Activated CD8-positive, alpha-beta T cell treated with anti-CD3 and anti-CD28 coated beads, Interleukin-2, amount 10 ng/mL, durations not matched to agents 7 days and 5 days (primary cell): ENCODE measurements at regions of chr14 and their contacts with region 1.

Region 1: DNA sequence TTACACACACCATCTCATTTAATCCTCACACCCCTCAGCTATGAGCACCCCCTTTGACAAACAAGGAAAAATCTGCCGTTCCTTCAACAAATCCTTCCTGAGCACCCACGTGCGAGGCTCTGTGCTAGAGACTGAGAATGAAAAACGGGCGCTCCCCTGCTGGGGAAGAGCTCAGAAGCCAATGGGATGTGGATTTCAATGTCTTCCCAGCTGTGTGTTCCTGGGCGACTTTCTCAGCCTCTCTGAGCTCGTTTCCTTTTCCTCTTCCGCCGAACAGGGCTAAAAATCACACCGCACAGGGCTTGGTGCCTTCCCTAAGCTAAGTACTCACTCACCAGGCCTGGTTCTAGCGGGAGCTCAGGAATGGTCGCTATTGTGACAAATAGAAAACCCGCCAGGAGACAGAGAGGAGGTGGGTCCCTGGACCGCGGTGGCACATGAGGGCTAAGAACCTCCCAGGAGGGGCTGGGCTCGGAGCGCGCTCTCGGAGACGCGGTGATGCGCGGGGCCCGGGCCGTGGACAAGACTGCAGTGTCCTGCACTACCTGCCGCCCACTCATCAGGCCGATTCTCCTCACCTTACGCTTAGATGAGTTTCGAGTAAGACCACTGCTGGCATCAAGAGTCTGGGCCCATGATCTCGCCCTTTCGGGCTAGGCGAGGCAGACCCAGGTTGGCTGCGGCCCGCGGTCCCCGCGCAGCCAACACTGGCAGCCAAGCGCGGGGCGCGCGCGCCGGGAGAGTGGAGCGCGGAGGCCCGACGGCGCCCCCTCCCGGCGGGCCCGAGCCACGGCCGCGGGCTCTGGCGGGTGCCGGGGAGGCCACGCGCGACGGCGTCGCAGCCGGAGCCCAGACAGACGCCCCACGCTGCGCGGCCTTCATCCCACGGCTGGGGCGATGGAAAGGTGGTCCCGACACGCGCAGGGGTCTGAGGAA is 17.0 kb downstream of the ZDHHC22 start:
- DNase-seq: peak; percentile 56
- ATAC-seq: peak; percentile 87
- H3K4me3 Mint-ChIP-seq: peak overlapping the region; percentile 70
- H3K27ac Mint-ChIP-seq: no peak overlapping the region
- H3K4me1 Mint-ChIP-seq: peaks cover 40% of the 10 kb centered on the region
- H3K27me3 Mint-ChIP-seq: peaks cover 47% of the 10 kb centered on the region

Region 2: DNA sequence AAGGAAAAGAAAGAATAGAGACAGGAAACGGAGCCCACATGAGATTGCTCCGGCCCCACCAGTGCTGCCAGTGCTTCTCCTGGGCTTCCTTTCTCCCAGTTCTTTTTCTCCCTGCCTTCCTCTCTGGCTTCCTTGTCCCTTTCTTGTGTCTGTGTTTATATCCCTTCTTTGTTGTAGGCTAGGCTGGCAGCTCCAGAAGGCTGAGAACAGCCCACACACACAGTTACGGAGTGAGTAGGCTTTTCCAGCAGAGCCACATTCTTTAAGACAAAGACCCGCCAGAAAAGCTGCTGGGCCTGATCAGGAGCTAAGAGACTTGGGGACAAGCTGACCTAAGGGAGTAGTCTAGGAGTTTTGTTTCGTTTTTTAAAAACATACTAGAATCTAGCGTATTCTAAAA is 13.6 kb before region 1 on chr14:
- CTCF ChIA-PET with region 1: interaction called, 37 read pairs
- POLR2A ChIA-PET with region 1: interaction called, 3 read pairs
- DNase-seq: no peak
- ATAC-seq: no peak
- H3K4me3 Mint-ChIP-seq: no peak overlapping the region
- H3K27ac Mint-ChIP-seq: no peak overlapping the region
- H3K4me1 Mint-ChIP-seq: no peaks in the 10 kb centered on the region
- H3K27me3 Mint-ChIP-seq: no peaks in the 10 kb centered on the region

Region 3: DNA sequence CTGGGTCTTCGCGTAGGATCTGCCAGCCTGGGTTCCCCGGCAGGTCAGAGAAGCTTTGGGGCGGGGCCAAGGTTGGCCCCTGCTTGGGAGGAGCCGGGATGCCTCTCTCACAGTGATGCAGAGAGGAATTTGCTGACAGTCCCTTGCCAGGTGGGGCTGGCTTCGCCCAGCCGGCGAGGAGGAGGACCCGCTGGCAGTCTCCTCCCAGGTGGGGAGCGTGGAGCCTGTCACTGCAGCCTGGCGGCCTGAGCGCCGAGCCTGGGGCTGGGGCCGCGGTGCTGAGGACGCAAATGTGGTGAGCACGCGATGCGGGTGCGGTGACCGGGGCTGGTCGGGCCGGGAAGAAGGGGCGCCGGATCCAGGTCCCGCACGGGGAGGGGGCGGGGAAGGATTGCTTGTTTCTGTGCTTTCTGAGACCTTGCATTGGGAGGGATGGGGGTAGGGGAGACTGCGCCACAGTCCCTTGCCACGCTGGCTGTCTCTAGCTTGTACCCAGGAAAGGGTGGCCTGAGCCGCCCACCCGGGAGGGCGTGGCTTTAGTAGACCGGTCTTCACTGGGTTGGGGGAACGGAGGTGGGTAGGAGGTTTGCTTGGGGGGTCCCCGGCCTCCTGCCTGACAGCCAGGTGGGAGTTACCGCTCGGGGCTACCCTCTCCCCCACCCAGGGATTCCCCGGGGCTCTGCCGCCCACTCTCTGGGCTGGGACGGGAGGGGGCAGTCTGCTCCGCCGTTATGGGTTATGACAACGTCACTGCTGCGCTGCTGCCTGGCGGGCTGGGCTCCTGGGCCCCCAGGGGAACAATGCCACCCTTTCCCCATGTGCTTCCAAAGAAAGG is 57.2 kb after region 1 on chr14 and contains the start of gene TMEM63C:
- CTCF ChIA-PET with region 1: no interaction called
- POLR2A ChIA-PET with region 1: no interaction called
- DNase-seq: peak; percentile 65
- ATAC-seq: peak; percentile 91
- H3K4me3 Mint-ChIP-seq: peak within 1 kb of the TSS; percentile 45
- H3K27ac Mint-ChIP-seq: no peak within 1 kb of the TSS
- H3K4me1 Mint-ChIP-seq: peaks cover 21% of the 10 kb centered on the region
- H3K27me3 Mint-ChIP-seq: peaks cover 26% of the 10 kb centered on the region
- total RNA-seq, gene TMEM63C: 0.73 to 0.74 TPM